ENCODE measurements at regions of chr1 and their contacts with region 1.

Region 1: GRCh38 chr1:201170533-201171062 is 16.3 kb upstream of the TMEM9 start:
- DNase-seq: peak; percentile 94 to 95
- ATAC-seq: peak; percentile 98 to 100 (median 99)
- H3K4me3 ChIP-seq: peak overlapping the region; percentile 51 to 90 (median 73)
- H3K27ac ChIP-seq: peak overlapping the region; percentile 85 to 94 (median 91)
- H3K4me1 ChIP-seq: peaks cover 0 to 22% (median 5%) of the 10 kb centered on the region in 9 donors
- H3K27me3 ChIP-seq: no peaks in the 10 kb centered on the region
- CTCF ChIP-seq: peak in 1 of 9 donors; percentile 3

Region 2: GRCh38 chr1:201154389-201155165 is 16.0 kb before region 1 on chr1 and contains the start of gene TMEM9:
- intact Hi-C with region 1: loop called in 1 of 10 experiments (anchors 1 kb)
- DNase-seq: peak; percentile 98
- ATAC-seq: peak; percentile 95 to 99 (median 98)
- H3K4me3 ChIP-seq: peak within 1 kb of the TSS; percentile 61 to 98 (median 88)
- H3K27ac ChIP-seq: peak within 1 kb of the TSS; percentile 29 to 77 (median 64)
- H3K4me1 ChIP-seq: peaks cover 3 to 18% (median 14%) of the 10 kb centered on the region in 9 donors
- H3K27me3 ChIP-seq: peaks cover 0 to 1% (median 0%) of the 10 kb centered on the region in 7 donors
- CTCF ChIP-seq: no peak
- total RNA-seq, gene TMEM9: 19.6 to 37.0 (median 25.4) TPM

Region 3: GRCh38 chr1:201515895-201516294 is 345.3 kb after region 1 on chr1:
- intact Hi-C with region 1: no loop called
- DNase-seq: no peak
- ATAC-seq: no peak
- H3K4me3 ChIP-seq: no peak overlapping the region
- H3K27ac ChIP-seq: no peak overlapping the region
- H3K4me1 ChIP-seq: peaks cover 7 to 29% (median 24%) of the 10 kb centered on the region in 9 donors
- H3K27me3 ChIP-seq: no peaks in the 10 kb centered on the region
- CTCF ChIP-seq: no peak

Measured in heart right ventricle (tissue), 16 donors.